A549 (cell line): ENCODE measurements at regions of chr2 and their contacts with region 1.

Region 1: DNA sequence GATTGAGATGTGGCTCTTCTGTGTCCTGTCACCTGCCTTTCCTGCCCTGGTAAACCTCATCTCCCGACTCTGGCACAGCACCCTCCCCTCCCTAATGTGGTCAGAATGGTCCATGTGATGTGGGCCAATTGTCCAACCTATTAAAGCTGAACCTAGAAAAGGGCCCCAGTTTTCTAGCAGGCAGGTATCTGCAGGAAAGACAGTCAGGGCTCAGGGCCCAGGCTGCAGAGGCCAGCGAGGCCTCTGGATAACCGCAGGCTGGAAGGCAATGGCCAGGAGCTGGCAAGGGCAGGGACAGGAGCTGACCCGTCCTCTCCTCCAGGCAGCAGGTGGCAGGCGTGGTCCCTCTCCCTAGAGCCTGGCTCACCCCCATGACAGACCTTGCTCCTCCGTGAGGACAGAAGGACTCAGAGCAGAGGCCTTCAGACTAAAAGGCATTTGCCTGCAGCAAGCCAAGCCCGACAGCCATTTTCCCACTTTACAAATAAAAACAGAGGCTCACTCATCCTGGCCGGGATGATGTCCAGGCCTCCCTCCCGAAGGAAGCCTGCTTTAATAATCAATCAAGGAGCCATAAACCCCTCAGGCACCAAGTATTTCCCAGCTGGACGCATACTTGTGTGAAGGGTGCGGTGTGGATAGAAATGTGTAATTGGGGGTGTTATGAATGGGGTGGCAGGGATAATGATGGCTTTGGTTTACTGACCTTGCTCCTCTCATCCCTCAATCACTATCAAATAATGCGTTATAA is 107.1 kb downstream of the TWIST2 start:
- DNase-seq: no peak
- ATAC-seq: no peak
- H3K4me3 ChIP-seq: no peak overlapping the region
- H3K27ac ChIP-seq: no peak overlapping the region
- H3K4me1 ChIP-seq: no peaks in the 10 kb centered on the region
- CTCF ChIP-seq: no peak
- EP300 ChIP-seq: no peak
- POLR2A ChIP-seq: no peak
- RAD21 ChIP-seq: no peak

Region 2: GRCh38 chr2:238857959-238858358 is 97.1 kb before region 1 on chr2:
- CTCF ChIA-PET with region 1: no interaction called
- POLR2A ChIA-PET with region 1: no interaction called
- DNase-seq: no peak
- ATAC-seq: no peak
- H3K4me3 ChIP-seq: no peak overlapping the region
- H3K27ac ChIP-seq: no peak overlapping the region
- H3K4me1 ChIP-seq: peaks cover 6% of the 10 kb centered on the region; the same call in 2 of the 3 replicates
- CTCF ChIP-seq: no peak
- EP300 ChIP-seq: no peak
- POLR2A ChIP-seq: no peak
- RAD21 ChIP-seq: no peak

Region 3: GRCh38 chr2:238970553-238971081 is 15.6 kb after region 1 on chr2:
- CTCF ChIA-PET with region 1: interaction called, 13 read pairs
- POLR2A ChIA-PET with region 1: no interaction called
- DNase-seq: peak; percentile 62 to 67
- ATAC-seq: peak; percentile 74 to 89
- H3K4me3 ChIP-seq: no peak overlapping the region
- H3K27ac ChIP-seq: peak overlapping the region; percentile 19 to 65; a peak in 1 of 6 replicates
- H3K4me1 ChIP-seq: peaks cover 24% of the 10 kb centered on the region
- CTCF ChIP-seq: peak; percentile 90
- EP300 ChIP-seq: no peak
- POLR2A ChIP-seq: no peak
- RAD21 ChIP-seq: peak; percentile 80